ENCODE measurements at regions of chr14 and their contacts with region 1.

Region 1: DNA sequence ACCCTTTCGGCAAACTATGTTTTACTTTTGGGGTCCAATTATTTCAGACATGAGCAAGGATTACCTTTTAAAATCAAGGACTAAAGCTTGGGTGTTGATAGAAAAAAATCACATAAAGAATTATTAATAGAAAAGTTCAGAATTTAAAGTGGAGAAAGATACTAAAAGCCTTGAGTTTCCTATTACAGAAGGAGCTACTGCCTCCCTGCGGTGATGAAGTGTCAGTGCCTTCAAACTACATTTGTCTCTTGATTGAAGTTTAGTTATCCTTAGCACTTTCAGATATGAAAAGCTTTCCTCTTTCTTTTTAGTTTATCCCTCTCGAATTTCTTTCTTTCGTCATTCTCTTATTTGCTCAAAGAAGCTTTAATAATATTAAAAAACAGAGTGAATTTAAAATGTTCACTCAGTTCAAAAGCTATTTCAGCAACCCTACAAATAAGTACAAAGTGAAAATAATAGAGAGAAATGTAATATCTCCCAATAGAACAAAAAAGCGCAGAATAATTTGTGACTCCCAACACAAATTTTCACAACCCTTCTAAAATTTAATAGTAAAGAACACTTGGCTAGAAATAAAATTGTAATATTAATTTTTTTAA is 87.6 kb downstream of the SEC23A start:
- DNase-seq: no peak
- H3K4me3 ChIP-seq: no peak overlapping the region
- H3K27ac ChIP-seq: no peak overlapping the region
- H3K4me1 ChIP-seq: no peaks in the 10 kb centered on the region
- H3K27me3 ChIP-seq: no peaks in the 10 kb centered on the region
- CTCF ChIP-seq: peak in 3 of 4 experiments; percentile 39 to 62 (median 50)
- EP300 ChIP-seq: no peak
- POLR2A ChIP-seq: no peak

Region 2: GRCh38 chr14:37903343-37904191 is 1111.9 kb before region 1 on chr14:
- intact Hi-C with region 1: loop called (anchors 10 kb)
- DNase-seq: no peak
- H3K4me3 ChIP-seq: no peak overlapping the region
- H3K27ac ChIP-seq: no peak overlapping the region
- H3K4me1 ChIP-seq: no peaks in the 10 kb centered on the region
- H3K27me3 ChIP-seq: no peaks in the 10 kb centered on the region
- CTCF ChIP-seq: peak in 3 of 4 experiments; percentile 10 to 44 (median 25)
- EP300 ChIP-seq: no peak
- POLR2A ChIP-seq: no peak

Region 3: DNA sequence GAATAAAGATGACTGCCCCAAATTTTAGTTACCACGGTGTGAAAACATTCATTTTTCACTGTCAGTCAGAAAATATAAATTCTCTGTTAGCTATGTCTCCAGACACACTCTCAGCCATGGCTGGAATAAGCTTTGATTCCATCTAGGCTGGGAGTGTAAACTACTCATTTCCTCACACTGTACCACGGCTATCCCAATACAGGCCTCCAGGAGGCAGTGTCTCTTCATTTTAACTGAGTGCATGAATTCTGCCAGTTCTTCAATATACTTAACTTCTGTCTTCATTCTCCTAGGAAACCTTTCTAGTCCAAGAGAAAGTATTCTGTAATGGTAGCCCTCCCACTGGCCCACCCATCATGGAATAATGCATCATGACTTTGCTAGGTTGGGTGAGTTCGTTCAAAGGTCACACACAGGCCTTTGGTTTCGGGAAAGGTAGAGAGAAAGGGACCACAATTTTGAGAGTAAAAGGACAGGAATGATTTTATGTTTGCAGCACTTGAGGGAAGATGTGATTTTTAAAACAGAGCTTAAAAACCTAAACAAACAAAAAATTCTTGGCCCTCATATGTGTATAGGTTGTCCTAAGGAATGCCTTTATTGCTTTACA is 293.5 kb before region 1 on chr14:
- intact Hi-C with region 1: loop called (anchors 5 kb)
- DNase-seq: no peak
- H3K4me3 ChIP-seq: no peak overlapping the region
- H3K27ac ChIP-seq: no peak overlapping the region
- H3K4me1 ChIP-seq: peaks cover 0 to 4% (median under 1%) of the 10 kb centered on the region in 4 donors
- H3K27me3 ChIP-seq: no peaks in the 10 kb centered on the region
- CTCF ChIP-seq: peak in 3 of 4 experiments; percentile 37 to 58 (median 58)
- EP300 ChIP-seq: no peak
- POLR2A ChIP-seq: no peak